H1 (cell line): ENCODE measurements at regions of chr12 and their contacts with region 1.

Region 1: DNA sequence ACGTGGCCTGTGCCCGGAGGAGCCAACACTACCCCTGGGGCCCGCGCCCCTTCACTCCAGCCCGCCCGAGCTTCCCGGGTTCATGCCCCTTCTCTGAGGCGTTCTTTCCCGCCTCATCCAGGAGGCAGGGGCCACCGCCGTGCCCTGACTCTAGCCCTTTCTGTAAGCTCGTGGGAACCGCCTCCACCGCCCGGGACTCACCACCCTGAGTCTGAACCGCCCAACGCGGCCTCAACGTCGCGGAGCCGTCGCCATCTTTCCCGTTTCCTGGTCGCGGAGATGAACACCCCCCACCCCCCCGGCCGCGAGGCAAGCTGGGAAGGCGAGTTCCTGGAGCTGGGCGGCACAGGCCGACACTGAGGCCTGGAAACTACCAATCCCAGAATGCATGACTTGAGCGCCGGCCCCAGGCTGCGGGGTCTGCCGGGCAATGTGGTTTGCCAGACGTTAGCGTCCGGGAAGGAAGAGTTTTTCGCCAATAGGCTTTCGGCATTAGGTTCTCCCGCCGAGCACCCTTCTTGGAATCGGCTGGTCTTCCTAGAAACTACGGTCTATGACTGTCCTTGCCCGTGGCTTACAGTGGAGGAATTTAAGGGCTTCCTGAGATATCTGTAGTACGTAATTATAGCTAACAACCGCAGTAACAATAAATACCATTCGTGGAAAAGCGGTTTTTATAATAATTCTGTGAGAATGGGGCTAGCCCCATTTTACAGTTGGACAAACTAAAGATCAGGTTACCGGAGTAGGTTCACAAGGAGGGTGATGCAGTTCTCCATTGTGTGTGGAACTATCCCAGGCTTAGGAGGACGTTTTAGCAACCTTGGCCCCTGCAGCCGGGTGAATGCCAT is at the start of gene DDX23:
- DNase-seq: peak; percentile 82 to 91
- H3K4me3 ChIP-seq: peak within 1 kb of the TSS; percentile 88 to 100 (median 98)
- H3K27ac ChIP-seq: peak within 1 kb of the TSS; percentile 85
- H3K4me1 ChIP-seq: peaks cover 0 to 10% (median 7%) of the 10 kb centered on the region in 4 experiments; a peak in 5 of 7 replicates
- H3K27me3 ChIP-seq: no peaks in the 10 kb centered on the region
- CTCF ChIP-seq: no peak
- EP300 ChIP-seq: no peak
- POLR2A ChIP-seq: peak; percentile 45 to 89
- RAD21 ChIP-seq: no peak
- total RNA-seq, gene DDX23: 98.1 and 107 TPM in 2 replicates

Region 2: GRCh38 chr12:48765753-48766162 is 86.3 kb before region 1 on chr12:
- CTCF ChIA-PET with region 1: no interaction called
- POLR2A ChIA-PET with region 1: no interaction called
- DNase-seq: no peak
- H3K4me3 ChIP-seq: no peak overlapping the region
- H3K27ac ChIP-seq: no peak overlapping the region
- H3K4me1 ChIP-seq: peaks cover 0 to 14% (median 9%) of the 10 kb centered on the region in 4 experiments; a peak in 6 of 7 replicates
- H3K27me3 ChIP-seq: no peaks in the 10 kb centered on the region
- CTCF ChIP-seq: no peak
- EP300 ChIP-seq: no peak
- POLR2A ChIP-seq: no peak
- RAD21 ChIP-seq: no peak

Region 3: DNA sequence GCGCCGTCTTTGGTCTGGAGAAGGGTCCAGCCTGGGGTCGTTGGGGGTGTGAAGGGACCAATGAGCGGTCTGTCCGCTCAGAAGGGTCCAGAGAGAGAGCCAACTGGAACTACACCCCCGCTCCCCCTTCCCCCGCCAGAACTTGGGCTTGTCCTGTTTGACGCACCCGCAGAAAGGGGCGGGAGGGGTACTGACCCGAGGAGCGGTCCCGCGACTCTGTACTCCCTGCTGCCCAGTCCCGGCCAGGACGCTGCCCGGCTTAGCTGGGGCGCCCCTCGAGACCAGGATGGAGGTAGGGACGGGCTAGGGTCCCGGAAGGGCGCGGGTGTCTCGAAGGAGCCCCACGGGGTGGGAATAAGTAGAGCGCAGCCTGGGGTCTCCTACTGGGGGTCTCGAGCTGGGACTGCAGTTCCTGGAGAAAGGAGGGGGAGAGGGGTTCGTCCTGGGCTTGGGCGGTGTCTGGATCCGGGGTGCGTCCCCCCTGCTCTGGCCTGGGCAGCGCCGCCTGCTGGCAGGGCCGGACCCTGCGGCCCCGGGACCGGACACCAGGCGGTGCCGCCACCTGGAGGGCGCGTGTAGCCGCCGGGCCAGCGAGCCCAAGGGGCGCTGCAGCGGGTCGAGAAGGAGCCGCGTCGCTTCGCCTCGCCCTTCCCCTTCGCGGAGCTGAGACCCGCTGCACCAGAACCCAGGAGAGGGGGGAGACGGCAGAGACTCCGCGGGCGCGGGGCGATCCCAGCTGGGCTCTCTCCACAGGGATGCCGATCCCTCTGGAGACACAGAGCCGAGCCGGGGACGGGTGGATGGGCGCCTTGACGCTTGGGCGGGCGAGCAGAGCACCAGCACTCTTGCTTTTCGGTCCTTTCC is 37.6 kb before region 1 on chr12:
- CTCF ChIA-PET with region 1: interaction called, 21 read pairs
- POLR2A ChIA-PET with region 1: interaction called, 23 read pairs
- DNase-seq: peak in 1 of 2 experiments; percentile 94
- H3K4me3 ChIP-seq: peak overlapping the region; percentile 59 to 94 (median 88)
- H3K27ac ChIP-seq: no peak overlapping the region
- H3K4me1 ChIP-seq: peaks cover 0 to 27% (median 19%) of the 10 kb centered on the region in 4 experiments; a peak in 6 of 7 replicates
- H3K27me3 ChIP-seq: peaks cover 17 to 46% (median 36%) of the 10 kb centered on the region in 4 experiments
- CTCF ChIP-seq: peak in 2 of 3 experiments; percentile 95 to 99; a peak in 3 of 4 replicates
- EP300 ChIP-seq: no peak; a peak in 1 of 3 replicates
- POLR2A ChIP-seq: no peak
- RAD21 ChIP-seq: peak in 1 of 2 experiments; percentile 48; a peak in 2 of 4 replicates

Region 4: GRCh38 chr12:48865434-48866290 is 13.6 kb after region 1 on chr12 and contains the start of gene RND1:
- CTCF ChIA-PET with region 1: interaction called, 96 read pairs
- POLR2A ChIA-PET with region 1: interaction called, 651 read pairs
- DNase-seq: peak; percentile 91 to 94
- H3K4me3 ChIP-seq: peak within 1 kb of the TSS; percentile 66 to 90 (median 76)
- H3K27ac ChIP-seq: peak within 1 kb of the TSS; percentile 82
- H3K4me1 ChIP-seq: peaks cover 7 to 26% (median 18%) of the 10 kb centered on the region in 4 experiments
- H3K27me3 ChIP-seq: no peaks in the 10 kb centered on the region
- CTCF ChIP-seq: peak in 1 of 3 experiments; percentile 16; a peak in 1 of 4 replicates
- EP300 ChIP-seq: no peak
- POLR2A ChIP-seq: peak; percentile 100
- RAD21 ChIP-seq: no peak
- total RNA-seq, gene RND1: 15.8 and 16.2 TPM in 2 replicates

Region 5: GRCh38 chr12:48903982-48904411 is 51.9 kb after region 1 on chr12:
- CTCF ChIA-PET with region 1: interaction called, 33 read pairs
- POLR2A ChIA-PET with region 1: interaction called, 4 read pairs
- DNase-seq: peak in 1 of 2 experiments; percentile 95
- H3K4me3 ChIP-seq: peak overlapping the region; percentile 13 to 59 (median 53); a peak in 7 of 8 replicates
- H3K27ac ChIP-seq: no peak overlapping the region
- H3K4me1 ChIP-seq: 0 out of 7 replicates have a peak, but pooled peaks cover 0 to 2% (median 0%) of the 10 kb centered on the region in 4 experiments
- H3K27me3 ChIP-seq: no peaks in the 10 kb centered on the region
- CTCF ChIP-seq: peak; percentile 75 to 77 (median 76)
- EP300 ChIP-seq: no peak
- POLR2A ChIP-seq: no peak
- RAD21 ChIP-seq: peak in 1 of 2 experiments; percentile 35; a peak in 2 of 4 replicates

Region 6: DNA sequence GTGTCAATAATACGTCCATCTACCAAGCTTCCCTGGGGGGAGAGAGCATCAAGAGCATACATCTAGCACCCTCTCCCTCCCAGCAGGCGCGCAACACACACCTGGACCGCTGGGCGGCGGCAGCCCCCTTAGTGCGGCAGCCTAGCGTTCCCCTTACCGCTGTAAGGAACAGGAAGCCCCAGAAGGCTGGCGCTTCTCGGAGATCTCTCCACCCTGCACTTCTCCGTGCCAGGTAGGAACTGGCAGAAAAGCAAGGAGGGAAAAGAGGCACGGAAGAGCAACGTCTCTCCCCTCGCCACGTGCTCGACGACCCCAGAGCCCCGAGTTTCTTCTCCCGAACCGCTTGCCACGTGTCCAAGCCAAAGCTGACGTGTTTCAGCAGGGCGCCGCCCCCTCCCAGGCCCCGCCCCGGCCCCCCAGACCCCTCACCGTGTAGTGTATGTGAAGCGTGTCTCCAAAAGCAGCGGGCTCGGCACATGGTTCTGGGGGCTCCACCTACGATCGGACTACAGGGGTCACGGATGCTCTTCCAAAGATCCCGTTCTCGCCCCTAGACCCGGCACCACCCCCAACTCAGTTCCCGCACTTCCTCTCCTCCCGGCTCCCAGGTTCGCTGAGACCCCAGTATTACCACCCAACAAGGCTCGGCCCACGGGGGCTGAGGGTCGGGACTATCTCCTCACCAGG is 72.7 kb after region 1 on chr12:
- CTCF ChIA-PET with region 1: interaction called, 43 read pairs
- POLR2A ChIA-PET with region 1: interaction called, 5 read pairs
- DNase-seq: peak; percentile 29 to 79
- H3K4me3 ChIP-seq: peak overlapping the region; percentile 61 to 86 (median 70)
- H3K27ac ChIP-seq: peak overlapping the region; percentile 55
- H3K4me1 ChIP-seq: peaks cover 0 to 14% (median 4%) of the 10 kb centered on the region in 4 experiments; a peak in 4 of 7 replicates
- H3K27me3 ChIP-seq: no peaks in the 10 kb centered on the region; a peak in 1 of 7 replicates
- CTCF ChIP-seq: peak; percentile 64 to 71 (median 69)
- EP300 ChIP-seq: no peak
- POLR2A ChIP-seq: peak; percentile 27 to 44; a peak in 2 of 3 replicates
- RAD21 ChIP-seq: peak; percentile 46 to 61

Region 7: GRCh38 chr12:48977315-48978281 is 125.5 kb after region 1 on chr12:
- CTCF ChIA-PET with region 1: interaction called, 14 read pairs
- POLR2A ChIA-PET with region 1: no interaction called
- DNase-seq: peak in 1 of 2 experiments; percentile 88
- H3K4me3 ChIP-seq: peak overlapping the region in 3 of 4 experiments; percentile 16 to 57 (median 26); a peak in 4 of 8 replicates
- H3K27ac ChIP-seq: no peak overlapping the region
- H3K4me1 ChIP-seq: peaks cover 0 to 39% (median 30%) of the 10 kb centered on the region in 4 experiments; a peak in 6 of 7 replicates
- H3K27me3 ChIP-seq: peaks cover 78 to 99% (median 96%) of the 10 kb centered on the region in 4 experiments
- CTCF ChIP-seq: peak in 2 of 3 experiments; percentile 63 to 99; a peak in 3 of 4 replicates
- EP300 ChIP-seq: no peak
- POLR2A ChIP-seq: no peak
- RAD21 ChIP-seq: peak; percentile 18 to 36; a peak in 3 of 4 replicates

Region 8: DNA sequence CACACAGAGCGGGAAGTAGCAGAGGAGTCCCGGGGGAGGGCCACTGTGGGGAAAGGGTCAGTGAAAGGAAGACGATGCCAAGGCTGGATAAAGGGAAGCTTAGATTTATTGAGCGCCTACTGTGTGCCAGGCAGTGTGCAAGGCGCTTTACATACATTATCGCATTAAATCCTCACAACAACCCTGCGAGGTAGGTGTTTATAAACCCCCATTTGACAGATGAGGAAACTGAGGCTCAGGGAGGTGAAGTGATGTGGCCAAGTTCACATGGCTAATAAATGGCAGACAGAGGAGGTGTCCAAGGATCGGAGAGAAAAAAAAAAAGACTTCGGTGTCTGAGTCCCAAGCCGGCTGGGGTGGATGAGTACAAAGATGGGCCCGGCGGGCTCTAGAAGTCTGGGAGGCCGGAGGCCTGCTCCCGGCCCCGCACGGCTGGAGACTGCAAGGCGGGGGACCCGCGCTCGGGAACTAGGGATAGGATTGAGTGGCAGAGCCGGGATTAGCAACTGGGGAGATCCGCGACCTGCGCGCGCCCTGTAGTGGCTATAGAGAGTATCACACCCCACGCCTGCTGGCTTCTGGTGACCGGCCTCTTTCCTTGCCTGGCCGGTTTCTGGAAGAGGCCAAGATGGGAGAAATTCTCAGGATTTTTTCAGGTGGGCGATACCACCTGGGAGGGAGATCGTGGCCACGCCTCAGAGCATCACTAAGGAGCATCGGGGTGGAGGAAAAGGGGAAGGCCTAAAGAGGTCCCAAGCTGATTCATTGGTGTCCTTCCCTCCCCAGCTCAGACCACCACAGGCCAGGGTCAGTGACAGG is 143.2 kb after region 1 on chr12:
- CTCF ChIA-PET with region 1: interaction called, 11 read pairs
- POLR2A ChIA-PET with region 1: no interaction called
- DNase-seq: peak in 1 of 2 experiments; percentile 92
- H3K4me3 ChIP-seq: peak overlapping the region in 1 of 4 experiments; percentile 40; a peak in 2 of 8 replicates
- H3K27ac ChIP-seq: no peak overlapping the region
- H3K4me1 ChIP-seq: peaks cover 9 to 29% (median 16%) of the 10 kb centered on the region in 4 experiments
- H3K27me3 ChIP-seq: peaks cover 50 to 74% (median 70%) of the 10 kb centered on the region in 4 experiments
- CTCF ChIP-seq: peak; percentile 74 to 91 (median 76)
- EP300 ChIP-seq: peak in 1 of 2 experiments; percentile 47; a peak in 1 of 3 replicates
- POLR2A ChIP-seq: no peak
- RAD21 ChIP-seq: peak; percentile 80 to 83